IMR-90 (cell line): ENCODE measurements at regions of chr3 and their contacts with region 1.

Region 1: GRCh38 chr3:190709351-190709773 is 153.1 kb downstream of the GMNC start:
- DNase-seq: no peak
- ATAC-seq: peak; percentile 44; the same call in 1 of the 2 replicates
- H3K4me3 ChIP-seq: no peak overlapping the region
- H3K27ac ChIP-seq: no peak overlapping the region
- H3K4me1 ChIP-seq: no peaks in the 10 kb centered on the region
- H3K27me3 ChIP-seq: no peaks in the 10 kb centered on the region
- CTCF ChIP-seq: no peak
- POLR2A ChIP-seq: no peak
- RAD21 ChIP-seq: no peak

Region 2: GRCh38 chr3:190188197-190188596 is 521.2 kb before region 1 on chr3:
- CTCF ChIA-PET with region 1: interaction called, 16 read pairs
- POLR2A ChIA-PET with region 1: no interaction called
- dilution Hi-C with region 1: no loop called
- in situ Hi-C with region 1: no loop called
- intact Hi-C with region 1: no loop called
- DNase-seq: no peak
- ATAC-seq: peak; percentile 16; the same call in 1 of the 2 replicates
- H3K4me3 ChIP-seq: no peak overlapping the region
- H3K27ac ChIP-seq: no peak overlapping the region
- H3K4me1 ChIP-seq: peaks cover 9% of the 10 kb centered on the region; the same call in 1 of the 2 replicates
- H3K27me3 ChIP-seq: no peaks in the 10 kb centered on the region
- CTCF ChIP-seq: no peak
- POLR2A ChIP-seq: no peak
- RAD21 ChIP-seq: no peak

Region 3: GRCh38 chr3:190249414-190249813 is 459.9 kb before region 1 on chr3:
- CTCF ChIA-PET with region 1: no interaction called
- POLR2A ChIA-PET with region 1: no interaction called
- dilution Hi-C with region 1: no loop called
- in situ Hi-C with region 1: no loop called
- intact Hi-C with region 1: no loop called
- DNase-seq: no peak
- ATAC-seq: no peak
- H3K4me3 ChIP-seq: no peak overlapping the region
- H3K27ac ChIP-seq: no peak overlapping the region
- H3K4me1 ChIP-seq: peaks cover 3% of the 10 kb centered on the region; the same call in 1 of the 2 replicates
- H3K27me3 ChIP-seq: no peaks in the 10 kb centered on the region
- CTCF ChIP-seq: no peak
- POLR2A ChIP-seq: no peak
- RAD21 ChIP-seq: no peak

Region 4: GRCh38 chr3:190739641-190740185 is 30.4 kb after region 1 on chr3:
- CTCF ChIA-PET with region 1: no interaction called
- POLR2A ChIA-PET with region 1: no interaction called
- dilution Hi-C with region 1: no loop called
- in situ Hi-C with region 1: no loop called
- intact Hi-C with region 1: no loop called
- DNase-seq: no peak
- ATAC-seq: no peak
- H3K4me3 ChIP-seq: no peak overlapping the region
- H3K27ac ChIP-seq: no peak overlapping the region
- H3K4me1 ChIP-seq: no peaks in the 10 kb centered on the region
- H3K27me3 ChIP-seq: 0 out of 2 replicates have a peak, but pooled peaks cover 2% of the 10 kb centered on the region
- CTCF ChIP-seq: no peak
- POLR2A ChIP-seq: no peak
- RAD21 ChIP-seq: no peak